ENCODE measurements at regions of chr9 and their contacts with region 1.

Region 1: DNA sequence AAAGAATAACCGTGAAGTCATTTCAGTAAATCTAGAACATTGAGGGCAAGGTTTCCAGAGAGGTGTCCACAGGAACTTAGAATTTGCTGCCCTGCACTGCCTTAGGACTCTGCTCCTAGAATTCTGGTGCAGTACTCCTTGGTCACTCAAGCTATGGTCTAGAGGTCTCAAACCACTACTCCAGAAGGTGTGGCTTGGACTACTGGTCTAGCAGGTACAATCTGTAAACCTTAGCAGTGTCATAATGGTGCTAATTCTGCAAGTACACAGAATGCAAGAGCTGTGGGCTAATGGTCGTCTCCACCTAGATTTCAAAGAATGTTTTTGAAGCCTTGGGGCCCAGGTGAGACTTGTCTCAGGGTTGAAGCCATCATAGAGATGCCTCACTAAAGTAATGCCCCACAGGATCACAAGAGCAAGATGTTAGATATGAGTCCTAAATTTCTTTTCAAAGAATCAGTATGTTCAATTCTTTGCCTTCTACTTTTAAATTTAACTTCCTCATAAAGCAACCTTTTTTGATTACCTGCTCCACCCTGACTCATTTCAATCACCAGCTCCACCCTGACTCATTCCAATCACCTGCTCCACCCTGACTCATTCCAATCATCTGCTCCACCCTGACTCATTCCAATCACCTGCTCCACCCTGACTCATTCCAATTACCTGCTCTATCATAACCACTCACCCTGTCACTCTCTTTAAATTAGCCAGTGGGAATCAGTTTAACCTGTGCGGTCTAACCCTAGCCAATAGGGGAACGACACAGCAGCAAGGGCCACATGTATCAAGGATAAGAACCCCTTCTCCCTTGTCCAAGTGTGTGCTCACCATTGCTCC is 1111.8 kb upstream of the ACO1 start:
- DNase-seq: peak; percentile 54
- ATAC-seq: peak; percentile 91
- H3K4me3 Mint-ChIP-seq: no peak overlapping the region
- H3K27ac Mint-ChIP-seq: peak overlapping the region; percentile 7
- H3K4me1 Mint-ChIP-seq: peaks cover 9% of the 10 kb centered on the region
- H3K27me3 Mint-ChIP-seq: no peaks in the 10 kb centered on the region

Region 2: DNA sequence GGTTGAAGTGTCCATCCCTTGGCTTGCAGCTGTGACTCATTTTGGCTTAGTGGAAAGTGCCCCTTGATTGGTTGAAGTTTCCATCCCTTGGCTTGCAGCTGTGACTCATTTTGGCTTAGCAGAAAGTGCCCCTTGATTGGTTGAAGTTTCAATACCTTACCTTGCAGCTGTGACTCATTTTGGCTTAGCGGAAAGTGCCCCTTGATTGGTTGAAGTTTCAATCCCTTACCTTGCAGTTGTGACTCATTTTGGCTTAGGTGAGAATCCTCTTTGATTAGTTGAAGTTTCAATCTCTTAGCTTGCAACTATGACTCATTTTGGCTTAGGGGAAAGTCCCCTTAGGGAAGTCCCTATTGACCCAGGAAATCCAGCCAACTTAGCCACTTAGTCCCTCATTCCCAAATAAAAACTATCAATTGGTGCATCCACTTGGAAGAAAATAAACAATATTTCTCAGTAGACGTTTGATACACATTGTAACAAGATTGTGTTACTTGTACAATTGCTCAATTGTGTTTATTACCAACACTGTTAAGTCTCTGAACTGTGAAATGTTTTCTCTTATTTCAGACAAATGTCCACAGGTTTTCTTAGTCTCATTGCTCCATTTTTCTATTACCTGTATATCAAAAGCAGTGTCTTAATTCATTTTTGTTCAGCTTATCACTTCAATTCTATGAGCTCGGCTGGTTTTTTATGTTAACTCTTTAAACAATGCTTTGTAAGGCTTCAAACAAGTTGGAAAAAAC is 1197.1 kb before region 1 on chr9:
- CTCF ChIA-PET with region 1: no interaction called
- POLR2A ChIA-PET with region 1: no interaction called
- intact Hi-C with region 1: loop called in 1 of 2 experiments (anchors 2 kb)
- DNase-seq: peak; percentile 70
- ATAC-seq: peak; percentile 90
- H3K4me3 Mint-ChIP-seq: no peak overlapping the region
- H3K27ac Mint-ChIP-seq: no peak overlapping the region
- H3K4me1 Mint-ChIP-seq: peaks cover 19% of the 10 kb centered on the region
- H3K27me3 Mint-ChIP-seq: peaks cover 5% of the 10 kb centered on the region

Region 3: DNA sequence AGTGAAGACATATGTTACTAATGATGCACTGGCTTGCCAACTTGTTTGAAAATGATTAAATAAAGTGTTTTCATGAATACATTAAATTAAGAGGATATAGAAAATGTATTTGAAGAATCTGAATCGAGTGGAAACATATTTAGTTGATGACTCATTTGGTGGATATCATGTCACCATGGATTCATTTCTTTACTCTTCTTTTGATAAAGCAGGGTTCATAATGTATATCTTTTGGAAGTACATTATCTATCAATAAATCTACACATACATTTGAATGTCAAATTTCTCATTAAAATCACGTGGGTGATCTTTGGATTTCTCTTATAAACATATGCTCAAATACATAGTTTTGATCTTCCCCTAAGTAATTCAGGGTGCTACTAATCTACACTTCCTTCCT is 36.3 kb before region 1 on chr9:
- CTCF ChIA-PET with region 1: no interaction called
- POLR2A ChIA-PET with region 1: no interaction called
- intact Hi-C with region 1: loop called in 1 of 2 experiments (anchors 2 kb)
- DNase-seq: no peak
- ATAC-seq: peak; percentile 36
- H3K4me3 Mint-ChIP-seq: no peak overlapping the region
- H3K27ac Mint-ChIP-seq: no peak overlapping the region
- H3K4me1 Mint-ChIP-seq: peaks cover 10% of the 10 kb centered on the region
- H3K27me3 Mint-ChIP-seq: no peaks in the 10 kb centered on the region

Region 4: GRCh38 chr9:31347082-31347617 is 74.5 kb after region 1 on chr9:
- CTCF ChIA-PET with region 1: no interaction called
- POLR2A ChIA-PET with region 1: no interaction called
- intact Hi-C with region 1: loop called in 1 of 2 experiments (anchors 5 kb)
- DNase-seq: no peak
- ATAC-seq: peak; percentile 94
- H3K4me3 Mint-ChIP-seq: peak overlapping the region; percentile 65
- H3K27ac Mint-ChIP-seq: peak overlapping the region; percentile 95
- H3K4me1 Mint-ChIP-seq: peaks cover 32% of the 10 kb centered on the region
- H3K27me3 Mint-ChIP-seq: no peaks in the 10 kb centered on the region

Region 5: GRCh38 chr9:31372799-31373587 is 100.3 kb after region 1 on chr9:
- CTCF ChIA-PET with region 1: no interaction called
- POLR2A ChIA-PET with region 1: no interaction called
- intact Hi-C with region 1: loop called in 1 of 2 experiments (anchors 5 kb)
- DNase-seq: no peak
- ATAC-seq: no peak
- H3K4me3 Mint-ChIP-seq: no peak overlapping the region
- H3K27ac Mint-ChIP-seq: no peak overlapping the region
- H3K4me1 Mint-ChIP-seq: no peaks in the 10 kb centered on the region
- H3K27me3 Mint-ChIP-seq: no peaks in the 10 kb centered on the region

Region 6: GRCh38 chr9:31394015-31394473 is 121.4 kb after region 1 on chr9:
- CTCF ChIA-PET with region 1: no interaction called
- POLR2A ChIA-PET with region 1: no interaction called
- intact Hi-C with region 1: no loop called
- DNase-seq: no peak
- ATAC-seq: no peak
- H3K4me3 Mint-ChIP-seq: no peak overlapping the region
- H3K27ac Mint-ChIP-seq: no peak overlapping the region
- H3K4me1 Mint-ChIP-seq: peaks cover 9% of the 10 kb centered on the region
- H3K27me3 Mint-ChIP-seq: no peaks in the 10 kb centered on the region